ENCODE measurements at regions of chr5 and their contacts with region 1.

Region 1: GRCh38 chr5:75681125-75681830 is 36.0 kb downstream of the POC5 start:
- DNase-seq: no peak
- H3K4me3 Mint-ChIP-seq: no peak overlapping the region
- H3K27ac Mint-ChIP-seq: peak overlapping the region; percentile 33
- H3K4me1 Mint-ChIP-seq: no peaks in the 10 kb centered on the region
- H3K27me3 Mint-ChIP-seq: no peaks in the 10 kb centered on the region
- CTCF ChIP-seq: peak; percentile 56

Region 2: GRCh38 chr5:75306746-75307145 is 374.5 kb before region 1 on chr5:
- CTCF ChIA-PET with region 1: no interaction called
- intact Hi-C with region 1: no loop called
- DNase-seq: no peak
- H3K4me3 Mint-ChIP-seq: no peak overlapping the region
- H3K27ac Mint-ChIP-seq: no peak overlapping the region
- H3K4me1 Mint-ChIP-seq: peaks cover 7% of the 10 kb centered on the region
- H3K27me3 Mint-ChIP-seq: no peaks in the 10 kb centered on the region
- CTCF ChIP-seq: no peak

Region 3: GRCh38 chr5:75412111-75412990 is 268.9 kb before region 1 on chr5:
- CTCF ChIA-PET with region 1: interaction called, 9 read pairs
- intact Hi-C with region 1: loop called (anchors 10 kb)
- DNase-seq: no peak
- H3K4me3 Mint-ChIP-seq: no peak overlapping the region
- H3K27ac Mint-ChIP-seq: no peak overlapping the region
- H3K4me1 Mint-ChIP-seq: no peaks in the 10 kb centered on the region
- H3K27me3 Mint-ChIP-seq: no peaks in the 10 kb centered on the region
- CTCF ChIP-seq: no peak

Region 4: DNA sequence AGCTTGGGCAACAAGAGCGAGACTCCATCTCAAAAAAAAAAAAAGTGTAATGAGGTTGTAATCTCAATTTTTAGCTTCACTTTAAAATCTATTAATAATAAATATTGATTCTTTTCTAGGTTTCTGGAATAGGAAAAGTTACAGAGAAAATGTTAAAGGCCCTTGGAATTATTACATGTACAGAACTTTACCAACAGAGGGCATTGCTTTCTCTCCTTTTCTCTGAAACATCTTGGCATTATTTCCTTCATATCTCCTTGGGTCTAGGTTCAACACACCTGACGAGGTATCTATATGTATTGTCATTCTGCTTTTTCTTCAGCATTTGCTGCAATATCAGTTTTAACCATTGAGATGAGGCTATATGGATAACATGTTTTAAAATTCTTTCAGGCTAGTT is 96.6 kb before region 1 on chr5:
- CTCF ChIA-PET with region 1: no interaction called
- intact Hi-C with region 1: loop called (anchors 2 kb)
- DNase-seq: no peak
- H3K4me3 Mint-ChIP-seq: no peak overlapping the region
- H3K27ac Mint-ChIP-seq: no peak overlapping the region
- H3K4me1 Mint-ChIP-seq: no peaks in the 10 kb centered on the region
- H3K27me3 Mint-ChIP-seq: no peaks in the 10 kb centered on the region
- CTCF ChIP-seq: no peak

Measured in Calu3 (cell line).